ENCODE measurements at regions of chr5 and their contacts with region 1.

Region 1: DNA sequence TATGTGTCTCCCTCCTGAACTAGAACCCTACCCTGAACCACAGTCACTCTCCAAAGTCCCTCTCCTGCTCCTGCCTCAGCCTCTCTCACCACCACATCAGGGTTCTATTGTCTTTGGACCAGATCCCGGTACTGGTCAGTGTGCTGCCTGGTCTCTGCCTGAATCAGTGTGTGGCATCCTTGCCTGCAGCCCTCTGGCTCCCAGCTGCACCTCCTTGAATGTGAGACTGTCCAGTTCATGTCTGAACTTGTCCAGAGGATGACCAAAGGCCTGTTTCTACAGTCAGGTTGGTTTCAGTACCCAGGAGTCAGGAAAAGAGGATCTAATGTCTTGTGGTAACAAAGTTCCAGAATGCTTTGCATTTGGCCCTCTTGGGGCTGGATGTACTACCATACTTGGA is 76.8 kb upstream of the RANBP3L start:
- DNase-seq: no peak
- H3K4me3 ChIP-seq: no peak overlapping the region
- H3K27ac ChIP-seq: no peak overlapping the region
- H3K4me1 ChIP-seq: peaks cover 0 to 15% (median 6%) of the 10 kb centered on the region in 4 experiments
- H3K27me3 ChIP-seq: no peaks in the 10 kb centered on the region

Region 2: GRCh38 chr5:36276864-36277263 is 101.7 kb before region 1 on chr5:
- CTCF ChIA-PET with region 1: no interaction called
- POLR2A ChIA-PET with region 1: no interaction called
- DNase-seq: no peak
- H3K4me3 ChIP-seq: no peak overlapping the region
- H3K27ac ChIP-seq: no peak overlapping the region
- H3K4me1 ChIP-seq: peaks cover 0 to 10% (median under 1%) of the 10 kb centered on the region in 4 experiments
- H3K27me3 ChIP-seq: no peaks in the 10 kb centered on the region

Region 3: GRCh38 chr5:36334315-36334714 is 44.2 kb before region 1 on chr5:
- CTCF ChIA-PET with region 1: no interaction called
- POLR2A ChIA-PET with region 1: no interaction called
- DNase-seq: no peak
- H3K4me3 ChIP-seq: no peak overlapping the region
- H3K27ac ChIP-seq: no peak overlapping the region
- H3K4me1 ChIP-seq: no peaks in the 10 kb centered on the region
- H3K27me3 ChIP-seq: no peaks in the 10 kb centered on the region

Region 4: GRCh38 chr5:36389245-36389644 is 10.7 kb after region 1 on chr5:
- CTCF ChIA-PET with region 1: interaction called, 16 read pairs
- POLR2A ChIA-PET with region 1: no interaction called
- DNase-seq: peak; percentile 61 to 84 (median 79)
- H3K4me3 ChIP-seq: no peak overlapping the region
- H3K27ac ChIP-seq: no peak overlapping the region
- H3K4me1 ChIP-seq: peaks cover 4 to 34% (median 23%) of the 10 kb centered on the region in 4 experiments
- H3K27me3 ChIP-seq: no peaks in the 10 kb centered on the region

Region 5: DNA sequence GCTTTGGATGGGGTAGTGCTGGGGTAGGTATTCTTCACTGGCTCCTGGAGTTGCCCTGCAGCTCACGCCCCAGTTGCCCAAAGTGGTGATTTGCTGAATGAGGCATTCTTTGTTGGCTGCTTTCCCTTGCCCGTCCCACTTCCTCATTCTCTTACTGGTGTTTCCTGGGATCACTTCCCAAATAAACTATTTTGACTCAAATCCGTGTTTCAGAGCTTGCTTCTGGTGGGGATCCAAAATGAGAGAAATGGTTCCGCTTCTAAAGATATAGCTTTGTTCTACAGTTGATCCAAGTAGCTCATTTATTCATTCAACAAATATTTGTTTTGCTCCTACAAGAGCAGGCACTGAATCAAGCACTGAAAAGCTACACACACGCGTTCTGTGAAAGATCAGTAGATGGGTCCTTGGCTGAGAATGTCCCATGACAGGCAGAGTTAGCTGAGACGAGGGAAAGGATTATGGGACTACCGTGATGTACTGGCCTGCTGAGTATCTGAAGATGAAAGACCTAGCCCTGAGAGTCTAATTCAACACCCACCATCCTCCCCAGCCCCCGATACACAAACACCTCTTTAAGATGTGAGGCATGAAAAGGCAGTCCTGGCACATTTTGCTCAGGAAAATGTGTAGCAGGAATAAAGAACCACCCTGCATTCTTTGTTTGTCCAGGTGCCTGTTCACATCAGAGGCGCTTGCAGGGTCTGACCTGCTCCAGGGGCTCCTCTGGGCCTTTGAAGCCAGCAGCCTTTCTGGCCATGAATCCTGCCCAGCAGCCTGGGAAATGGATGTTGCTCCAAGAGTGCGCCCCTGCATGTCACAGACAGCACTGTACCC is 66.2 kb after region 1 on chr5:
- CTCF ChIA-PET with region 1: no interaction called
- POLR2A ChIA-PET with region 1: no interaction called
- DNase-seq: no peak
- H3K4me3 ChIP-seq: no peak overlapping the region
- H3K27ac ChIP-seq: no peak overlapping the region
- H3K4me1 ChIP-seq: peaks cover 0 to 11% (median 7%) of the 10 kb centered on the region in 4 experiments
- H3K27me3 ChIP-seq: no peaks in the 10 kb centered on the region

Measured in common myeloid progenitor, CD34-positive (primary cell).